A549 (cell line): ENCODE measurements at regions of chr3 and their contacts with region 1.

Region 1: GRCh38 chr3:120095226-120095978 is 1.2 kb upstream of the GSK3B start:
- DNase-seq: peak; percentile 79 to 95
- ATAC-seq: peak; percentile 65 to 80
- H3K4me3 ChIP-seq: peak overlapping the region; percentile 80
- H3K27ac ChIP-seq: peak overlapping the region; percentile 95 to 99
- H3K4me1 ChIP-seq: peaks cover 19% of the 10 kb centered on the region
- CTCF ChIP-seq: no peak
- EP300 ChIP-seq: no peak
- POLR2A ChIP-seq: peak; percentile 90
- RAD21 ChIP-seq: peak; percentile 12 to 28; a peak in 1 of 5 replicates

Region 2: GRCh38 chr3:119898478-119899191 is 196.8 kb before region 1 on chr3:
- CTCF ChIA-PET with region 1: no interaction called
- POLR2A ChIA-PET with region 1: interaction called, 12 read pairs
- DNase-seq: no peak
- ATAC-seq: no peak
- H3K4me3 ChIP-seq: no peak overlapping the region
- H3K27ac ChIP-seq: no peak overlapping the region
- H3K4me1 ChIP-seq: no peaks in the 10 kb centered on the region
- CTCF ChIP-seq: no peak
- EP300 ChIP-seq: no peak
- POLR2A ChIP-seq: no peak
- RAD21 ChIP-seq: no peak

Region 3: GRCh38 chr3:120113128-120114116 is 18.0 kb after region 1 on chr3:
- CTCF ChIA-PET with region 1: interaction called, 4 read pairs
- POLR2A ChIA-PET with region 1: interaction called, 10 read pairs
- DNase-seq: peak in 1 of 2 experiments; percentile 29
- ATAC-seq: peak; percentile 73 to 87
- H3K4me3 ChIP-seq: no peak overlapping the region
- H3K27ac ChIP-seq: peak overlapping the region in 1 of 2 experiments; percentile 38; a peak in 1 of 6 replicates
- H3K4me1 ChIP-seq: peaks cover 26% of the 10 kb centered on the region
- CTCF ChIP-seq: no peak
- EP300 ChIP-seq: no peak
- POLR2A ChIP-seq: no peak
- RAD21 ChIP-seq: 0 out of 5 replicates have a peak, but pooled peaks of 1 of the 2 experiments have one; percentile 18

Region 4: DNA sequence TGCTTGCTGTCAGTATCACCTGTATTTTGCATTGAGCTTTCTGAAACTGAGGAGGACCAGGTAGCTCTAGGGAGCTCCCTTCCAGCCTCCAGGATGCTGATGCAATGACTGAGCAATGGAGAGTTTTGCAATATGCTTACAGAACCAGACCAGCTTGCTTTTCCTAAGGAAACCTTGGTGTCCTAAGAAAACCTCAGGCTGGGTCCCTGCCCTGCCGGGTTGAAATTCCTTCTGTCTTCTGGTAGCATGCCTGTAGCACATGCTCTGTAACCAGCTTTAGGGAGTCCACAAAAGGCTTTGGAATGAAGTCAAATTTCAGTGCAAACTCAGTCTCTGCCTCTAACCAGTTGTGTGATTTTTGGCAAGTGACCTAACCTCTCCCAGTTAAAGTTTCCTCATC is 64.6 kb after region 1 on chr3:
- CTCF ChIA-PET with region 1: no interaction called
- POLR2A ChIA-PET with region 1: interaction called, 49 read pairs
- DNase-seq: peak in 1 of 2 experiments; percentile 76
- ATAC-seq: peak; percentile 81 to 95
- H3K4me3 ChIP-seq: no peak overlapping the region
- H3K27ac ChIP-seq: peak overlapping the region; percentile 80 to 82
- H3K4me1 ChIP-seq: peaks cover 27% of the 10 kb centered on the region
- CTCF ChIP-seq: no peak
- EP300 ChIP-seq: peak; percentile 57 to 59; a peak in 2 of 5 replicates
- POLR2A ChIP-seq: no peak
- RAD21 ChIP-seq: peak in 1 of 2 experiments; percentile 44; a peak in 2 of 5 replicates

Region 5: DNA sequence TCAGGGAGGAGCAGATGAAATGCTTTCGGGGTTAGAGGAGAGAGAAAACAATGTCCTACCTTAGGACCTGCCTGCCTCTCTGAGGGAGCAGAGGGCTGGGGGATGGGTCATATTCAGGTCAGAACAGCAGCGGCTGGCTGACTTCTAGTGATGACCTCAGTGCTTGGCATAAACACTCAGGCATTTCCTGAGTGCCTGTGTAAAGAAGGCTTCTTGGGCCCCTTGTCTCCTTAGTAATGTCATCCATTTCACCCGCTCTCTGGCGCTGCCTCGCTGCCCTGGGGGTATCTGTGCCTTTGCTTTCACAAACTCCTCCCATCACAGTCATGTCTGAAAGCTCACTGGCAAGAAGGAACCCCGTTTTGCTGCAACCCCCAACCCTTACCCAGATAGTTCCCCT is 81.7 kb after region 1 on chr3:
- CTCF ChIA-PET with region 1: no interaction called
- POLR2A ChIA-PET with region 1: interaction called, 48 read pairs
- DNase-seq: peak; percentile 65 to 87
- ATAC-seq: peak; percentile 95 to 97
- H3K4me3 ChIP-seq: peak overlapping the region; percentile 5; the same call in 1 of the 3 replicates
- H3K27ac ChIP-seq: peak overlapping the region; percentile 82 to 89
- H3K4me1 ChIP-seq: peaks cover 51% of the 10 kb centered on the region
- CTCF ChIP-seq: no peak
- EP300 ChIP-seq: peak; percentile 22 to 36; a peak in 2 of 5 replicates
- POLR2A ChIP-seq: no peak
- RAD21 ChIP-seq: peak in 1 of 2 experiments; percentile 39; a peak in 3 of 5 replicates

Region 6: DNA sequence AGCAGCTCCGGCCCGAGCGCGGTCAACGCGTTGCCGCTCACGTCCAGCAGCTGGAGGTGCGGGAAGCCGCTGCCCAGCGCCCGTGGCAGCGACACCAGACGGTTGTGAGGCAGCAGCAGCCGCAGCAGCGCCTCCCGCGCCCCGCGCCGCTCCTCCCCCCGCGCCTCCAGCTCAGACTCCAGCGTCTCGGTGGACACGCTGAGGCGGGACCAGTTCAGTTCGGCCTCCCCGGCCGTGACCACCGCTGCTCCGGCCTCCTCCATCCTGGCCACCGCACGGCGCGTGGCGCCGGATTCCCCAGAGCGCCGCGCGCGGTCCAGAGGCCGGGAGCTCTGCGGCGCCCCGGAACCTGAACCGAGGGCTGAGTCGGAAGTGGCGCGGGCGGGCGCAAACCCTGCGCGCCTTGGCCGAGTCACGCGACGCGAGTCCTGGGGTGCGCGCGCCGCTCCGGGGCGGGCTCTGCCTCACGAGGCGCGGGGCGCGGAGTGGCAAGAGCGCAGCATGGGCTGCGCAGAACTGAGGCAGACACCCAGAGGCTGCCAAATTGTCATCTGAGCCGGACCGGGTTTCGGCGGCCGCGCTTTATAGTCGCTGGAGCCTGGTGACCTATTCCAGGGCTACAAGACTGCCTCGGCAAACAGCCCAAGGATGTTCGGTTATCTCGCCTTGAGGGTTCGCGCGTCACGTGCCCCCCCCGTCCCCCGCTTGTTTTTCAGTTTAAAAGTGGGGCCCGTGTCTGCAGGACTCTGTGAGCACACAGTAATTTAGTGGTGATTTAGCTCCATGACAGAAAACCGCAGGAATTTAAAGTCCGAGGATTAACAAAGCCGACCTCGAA is 253.8 kb after region 1 on chr3 and contains the start of gene LRRC58:
- CTCF ChIA-PET with region 1: no interaction called
- POLR2A ChIA-PET with region 1: interaction called, 23 read pairs
- DNase-seq: peak; percentile 82 to 95
- ATAC-seq: peak; percentile 91 to 94
- H3K4me3 ChIP-seq: peak within 1 kb of the TSS; percentile 70
- H3K27ac ChIP-seq: peak within 1 kb of the TSS; percentile 91 to 95
- H3K4me1 ChIP-seq: peaks cover 41% of the 10 kb centered on the region
- CTCF ChIP-seq: peak; percentile 35; the same call in 2 of the 3 replicates
- EP300 ChIP-seq: peak in 1 of 2 experiments; percentile 33; a peak in 1 of 5 replicates
- POLR2A ChIP-seq: peak; percentile 80
- RAD21 ChIP-seq: 0 out of 5 replicates have a peak, but pooled peaks of 1 of the 2 experiments have one; percentile 24
- polyA plus RNA-seq, gene LRRC58: 24.1 and 29.9 TPM in 2 replicates